Gastrocnemius medialis (tissue), 4 donors: ENCODE measurements at regions of chr9 and their contacts with region 1.

Region 1: DNA sequence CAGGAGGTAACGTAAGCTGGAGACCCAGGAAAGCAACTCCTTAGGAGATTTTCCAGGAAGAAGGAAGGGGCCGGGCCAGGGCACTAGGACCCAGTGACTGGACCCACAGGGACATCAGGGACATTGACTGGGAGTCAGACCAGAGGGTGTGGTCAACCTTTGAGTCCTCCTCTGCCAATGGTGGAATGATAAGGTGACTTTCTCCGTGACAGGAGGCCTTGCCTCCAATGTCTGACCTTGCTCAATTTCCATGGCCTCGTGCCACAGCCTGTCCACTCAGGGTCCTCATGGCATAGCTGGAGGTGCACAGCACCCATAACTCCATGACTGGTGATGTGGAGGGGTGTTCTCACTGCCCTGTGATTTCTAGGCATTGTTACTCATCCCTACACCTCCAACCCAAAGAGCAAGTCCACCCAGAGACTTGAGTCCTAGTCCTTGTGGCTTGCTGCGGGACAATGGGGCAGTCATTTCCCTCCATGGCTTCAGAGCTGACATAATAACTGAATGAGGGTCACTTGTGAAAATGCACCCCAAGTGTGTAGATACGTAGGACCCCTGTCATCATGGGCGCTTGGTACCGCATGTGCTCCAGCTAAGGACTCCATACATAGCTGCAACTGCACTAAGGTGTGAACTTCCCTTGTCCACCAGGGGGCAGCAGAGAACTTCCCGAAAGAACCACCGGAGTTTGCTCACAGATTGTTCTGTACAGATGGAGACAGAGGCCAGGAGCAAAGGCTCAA is 4.1 kb upstream of the AMBP start:
- DNase-seq: peak; percentile 62 to 79
- ATAC-seq: peak; percentile 95 to 98
- H3K4me3 ChIP-seq: no peak overlapping the region
- H3K27ac ChIP-seq: no peak overlapping the region
- H3K4me1 ChIP-seq: no peaks in the 10 kb centered on the region
- H3K27me3 ChIP-seq: peaks cover 0 to 6% (median 0%) of the 10 kb centered on the region in 3 donors
- CTCF ChIP-seq: peak; percentile 72 to 94 (median 89)
- POLR2A ChIP-seq: no peak

Region 2: GRCh38 chr9:114291064-114291474 is 208.9 kb after region 1 on chr9:
- in situ Hi-C with region 1: no loop called
- intact Hi-C with region 1: loop called (anchors 1 kb)
- DNase-seq: peak; percentile 31 to 56
- ATAC-seq: peak; percentile 69 to 75
- H3K4me3 ChIP-seq: no peak overlapping the region
- H3K27ac ChIP-seq: no peak overlapping the region
- H3K4me1 ChIP-seq: no peaks in the 10 kb centered on the region
- H3K27me3 ChIP-seq: no peaks in the 10 kb centered on the region
- CTCF ChIP-seq: peak; percentile 84 to 96 (median 93)
- POLR2A ChIP-seq: no peak